CD8-positive, alpha-beta T cell (primary cell): ENCODE measurements at regions of chr14 and their contacts with region 1.

Region 1: DNA sequence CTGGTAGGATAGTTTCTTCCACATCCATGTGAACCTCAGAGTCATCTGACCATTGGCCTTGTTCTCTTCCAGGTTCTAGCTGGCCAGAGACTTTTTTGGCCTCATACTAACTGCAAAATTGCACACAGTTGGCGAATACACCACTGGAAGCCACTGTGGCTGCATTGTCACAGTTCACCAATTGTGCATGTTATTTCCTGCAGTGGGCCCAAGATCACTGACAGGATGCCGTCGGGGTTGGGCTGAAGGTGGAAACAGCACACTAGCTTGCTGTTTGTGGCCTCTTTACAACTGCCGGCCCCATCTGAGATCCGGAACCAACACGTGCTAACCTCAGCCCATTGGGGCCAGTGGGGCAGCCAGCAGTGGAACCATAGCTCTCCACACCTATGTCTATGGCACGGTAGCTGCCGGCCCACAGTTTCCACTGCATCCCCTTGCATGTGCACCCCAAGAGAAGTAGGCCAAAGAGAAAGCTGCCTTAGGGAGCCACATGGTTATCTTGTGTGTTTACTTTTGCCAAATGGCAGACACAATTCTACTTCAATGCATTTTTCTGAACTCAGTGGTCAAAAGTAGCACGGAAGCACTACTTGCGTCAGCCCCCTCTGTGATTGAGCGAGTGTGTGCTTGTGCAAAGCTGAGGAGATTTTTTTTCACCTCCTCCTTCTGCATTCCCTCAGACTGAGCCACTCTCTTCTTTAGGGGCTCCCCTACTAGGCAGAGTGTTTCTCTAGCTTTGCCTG is 464.0 kb downstream of the RAD51B start:
- DNase-seq: peak; percentile 32 to 87 (median 72)
- ATAC-seq: peak; percentile 69
- H3K4me3 ChIP-seq: peak overlapping the region in 1 of 2 experiments; percentile 6
- H3K4me3 Mint-ChIP-seq: peak overlapping the region; percentile 62
- H3K27ac ChIP-seq: peak overlapping the region; percentile 57 to 89
- H3K27ac Mint-ChIP-seq: peak overlapping the region; percentile 98
- H3K4me1 ChIP-seq: peaks cover 71% of the 10 kb centered on the region
- H3K4me1 Mint-ChIP-seq: peaks cover 85% of the 10 kb centered on the region
- H3K27me3 ChIP-seq: no peaks in the 10 kb centered on the region
- H3K27me3 Mint-ChIP-seq: no peaks in the 10 kb centered on the region
- CTCF ChIP-seq: no peak

Region 2: DNA sequence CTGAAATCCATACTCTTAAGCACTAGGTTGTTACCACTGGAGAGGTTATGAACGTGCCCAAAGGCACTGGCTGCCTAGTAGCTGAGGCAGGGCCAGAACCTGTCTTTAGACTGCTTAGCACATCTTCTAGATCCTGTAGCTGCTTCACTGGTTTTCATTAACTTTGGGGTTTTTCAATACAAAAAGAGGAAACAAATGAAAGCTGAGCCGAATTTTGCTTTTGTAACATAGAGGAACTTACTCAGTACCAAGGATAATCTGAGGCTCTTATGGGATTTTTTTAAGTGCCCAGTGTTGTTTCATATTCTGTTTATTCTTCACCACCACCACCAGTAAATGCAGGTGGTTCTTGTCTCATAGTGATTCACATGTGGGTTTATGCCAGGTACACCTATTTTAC is 67.9 kb before region 1 on chr14:
- CTCF ChIA-PET with region 1: no interaction called
- POLR2A ChIA-PET with region 1: no interaction called
- intact Hi-C with region 1: no loop called
- DNase-seq: no peak
- ATAC-seq: no peak
- H3K4me3 ChIP-seq: no peak overlapping the region
- H3K4me3 Mint-ChIP-seq: no peak overlapping the region
- H3K27ac ChIP-seq: no peak overlapping the region
- H3K27ac Mint-ChIP-seq: no peak overlapping the region
- H3K4me1 ChIP-seq: no peaks in the 10 kb centered on the region
- H3K4me1 Mint-ChIP-seq: peaks cover 36% of the 10 kb centered on the region
- H3K27me3 ChIP-seq: no peaks in the 10 kb centered on the region
- H3K27me3 Mint-ChIP-seq: no peaks in the 10 kb centered on the region
- CTCF ChIP-seq: no peak

Region 3: GRCh38 chr14:68239988-68240771 is 43.4 kb before region 1 on chr14:
- CTCF ChIA-PET with region 1: no interaction called
- POLR2A ChIA-PET with region 1: no interaction called
- intact Hi-C with region 1: no loop called
- DNase-seq: no peak
- ATAC-seq: no peak
- H3K4me3 ChIP-seq: no peak overlapping the region
- H3K4me3 Mint-ChIP-seq: no peak overlapping the region
- H3K27ac ChIP-seq: no peak overlapping the region
- H3K27ac Mint-ChIP-seq: no peak overlapping the region
- H3K4me1 ChIP-seq: no peaks in the 10 kb centered on the region
- H3K4me1 Mint-ChIP-seq: no peaks in the 10 kb centered on the region
- H3K27me3 ChIP-seq: no peaks in the 10 kb centered on the region
- H3K27me3 Mint-ChIP-seq: no peaks in the 10 kb centered on the region
- CTCF ChIP-seq: no peak

Region 4: DNA sequence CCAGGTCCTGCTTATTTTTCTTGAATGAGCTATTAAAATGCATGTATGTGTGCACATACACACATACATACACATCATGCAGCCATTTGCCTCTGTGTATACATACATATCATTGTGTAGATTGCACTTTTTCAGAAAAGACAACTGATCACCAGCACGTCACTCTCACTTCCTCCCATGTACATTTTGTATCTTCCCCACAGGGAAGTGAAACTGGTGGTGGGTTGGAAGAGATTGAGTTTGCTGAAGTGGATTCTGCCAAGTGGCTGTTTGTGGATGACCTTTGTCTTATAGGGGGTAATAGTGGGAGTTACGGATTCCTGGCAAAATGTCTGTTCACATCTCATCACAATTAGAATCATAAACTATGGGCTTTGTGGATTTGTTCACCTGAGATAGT is 15.4 kb before region 1 on chr14:
- CTCF ChIA-PET with region 1: interaction called, 3 read pairs
- POLR2A ChIA-PET with region 1: interaction called, 10 read pairs
- intact Hi-C with region 1: loop called in 1 of 2 experiments (anchors 2 kb)
- DNase-seq: peak in 1 of 9 experiments; percentile 57
- ATAC-seq: peak; percentile 40
- H3K4me3 ChIP-seq: no peak overlapping the region
- H3K4me3 Mint-ChIP-seq: peak overlapping the region; percentile 2
- H3K27ac ChIP-seq: peak overlapping the region in 1 of 2 experiments; percentile 49
- H3K27ac Mint-ChIP-seq: peak overlapping the region; percentile 81
- H3K4me1 ChIP-seq: peaks cover 35% of the 10 kb centered on the region
- H3K4me1 Mint-ChIP-seq: peaks cover 45% of the 10 kb centered on the region
- H3K27me3 ChIP-seq: no peaks in the 10 kb centered on the region
- H3K27me3 Mint-ChIP-seq: no peaks in the 10 kb centered on the region
- CTCF ChIP-seq: no peak

Region 5: DNA sequence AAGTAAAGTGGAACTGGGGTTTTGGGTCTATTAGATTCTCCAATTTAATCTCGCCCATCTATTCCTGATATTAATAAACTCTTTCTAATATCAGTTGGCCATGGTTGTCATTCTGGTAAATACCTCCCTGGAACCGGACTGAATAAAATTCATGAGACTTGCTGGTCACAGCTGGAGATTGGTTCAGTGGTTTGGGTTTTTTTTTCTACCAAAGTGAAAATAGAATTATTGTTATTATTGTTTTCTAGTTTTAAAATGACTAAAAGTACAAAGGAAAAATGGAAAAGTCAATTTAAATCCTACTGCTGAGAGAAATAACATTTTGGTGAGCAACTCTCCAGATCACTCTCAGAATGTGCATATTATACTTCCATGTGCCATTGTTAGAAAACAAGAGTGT is 71.9 kb after region 1 on chr14:
- CTCF ChIA-PET with region 1: no interaction called
- POLR2A ChIA-PET with region 1: no interaction called
- intact Hi-C with region 1: no loop called
- DNase-seq: no peak
- ATAC-seq: no peak
- H3K4me3 ChIP-seq: no peak overlapping the region
- H3K4me3 Mint-ChIP-seq: no peak overlapping the region
- H3K27ac ChIP-seq: no peak overlapping the region
- H3K27ac Mint-ChIP-seq: no peak overlapping the region
- H3K4me1 ChIP-seq: peaks cover 11% of the 10 kb centered on the region
- H3K4me1 Mint-ChIP-seq: peaks cover 22% of the 10 kb centered on the region
- H3K27me3 ChIP-seq: no peaks in the 10 kb centered on the region
- H3K27me3 Mint-ChIP-seq: no peaks in the 10 kb centered on the region
- CTCF ChIP-seq: no peak

Region 6: DNA sequence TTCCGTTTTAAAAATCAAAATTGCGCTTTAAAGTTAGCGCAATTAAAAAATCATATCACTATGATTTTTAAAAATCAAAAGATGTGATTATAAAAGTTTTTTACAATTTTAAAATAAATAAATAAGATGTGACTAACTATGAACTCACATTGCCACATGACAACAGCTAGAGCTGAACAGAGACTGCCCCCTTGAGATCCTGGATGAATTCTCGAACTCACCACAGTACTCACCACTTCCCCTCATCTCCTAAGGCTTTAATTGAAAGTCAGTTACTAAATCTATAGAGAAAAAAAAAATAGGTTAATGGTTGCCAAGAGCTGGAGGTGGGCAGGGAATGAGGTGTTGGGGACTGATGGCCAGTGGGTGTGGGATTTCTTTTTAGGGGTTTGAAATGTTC is 125.1 kb after region 1 on chr14:
- CTCF ChIA-PET with region 1: interaction called, 12 read pairs
- POLR2A ChIA-PET with region 1: interaction called, 3 read pairs
- intact Hi-C with region 1: loop called in 1 of 2 experiments (anchors 10 kb)
- DNase-seq: peak in 2 of 9 experiments; percentile 41 to 64
- ATAC-seq: peak; percentile 49
- H3K4me3 ChIP-seq: no peak overlapping the region
- H3K4me3 Mint-ChIP-seq: no peak overlapping the region
- H3K27ac ChIP-seq: no peak overlapping the region
- H3K27ac Mint-ChIP-seq: peak overlapping the region; percentile 4
- H3K4me1 ChIP-seq: peaks cover 25% of the 10 kb centered on the region
- H3K4me1 Mint-ChIP-seq: peaks cover 38% of the 10 kb centered on the region
- H3K27me3 ChIP-seq: no peaks in the 10 kb centered on the region
- H3K27me3 Mint-ChIP-seq: no peaks in the 10 kb centered on the region
- CTCF ChIP-seq: no peak

Region 7: DNA sequence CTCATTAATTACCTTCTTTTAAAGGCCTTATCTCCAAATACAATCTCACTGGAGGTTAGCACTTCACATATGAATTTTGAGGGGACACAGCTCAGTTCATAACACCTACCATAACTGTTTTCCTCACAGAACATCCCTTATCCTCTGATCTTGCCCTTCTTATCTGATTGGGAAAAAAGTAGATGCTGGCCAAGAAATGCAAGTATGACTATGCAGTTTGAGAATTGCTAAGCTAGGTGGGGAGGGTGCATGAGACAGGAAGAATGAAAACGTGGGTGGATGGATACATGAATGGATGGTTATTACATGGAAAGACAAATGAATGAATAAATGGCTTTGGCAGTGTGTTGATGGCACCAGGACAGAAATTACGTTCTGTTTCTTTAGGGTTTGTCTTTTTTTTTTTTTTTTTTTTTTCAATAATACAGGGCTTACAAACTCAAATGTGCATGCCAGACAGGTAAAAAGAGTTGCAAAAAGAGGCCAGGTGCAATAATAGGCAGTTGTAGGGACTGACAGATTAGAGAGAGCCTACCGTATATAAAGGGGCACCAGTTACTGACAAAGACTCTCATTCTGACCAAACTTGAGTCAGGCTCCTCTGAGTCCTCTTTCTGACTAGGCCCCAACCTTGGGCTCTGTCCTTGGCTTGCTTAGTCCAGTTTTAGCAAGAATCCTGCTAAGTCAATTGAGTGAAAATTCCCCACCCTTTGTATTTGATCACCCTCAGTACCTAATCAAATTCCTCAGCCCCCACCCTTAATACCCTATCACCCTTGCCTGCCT is 204.4 kb after region 1 on chr14:
- CTCF ChIA-PET with region 1: no interaction called
- POLR2A ChIA-PET with region 1: no interaction called
- intact Hi-C with region 1: loop called in 1 of 2 experiments (anchors 10 kb)
- DNase-seq: no peak
- ATAC-seq: no peak
- H3K4me3 ChIP-seq: no peak overlapping the region
- H3K4me3 Mint-ChIP-seq: no peak overlapping the region
- H3K27ac ChIP-seq: no peak overlapping the region
- H3K27ac Mint-ChIP-seq: no peak overlapping the region
- H3K4me1 ChIP-seq: peaks cover 28% of the 10 kb centered on the region
- H3K4me1 Mint-ChIP-seq: peaks cover 43% of the 10 kb centered on the region
- H3K27me3 ChIP-seq: no peaks in the 10 kb centered on the region
- H3K27me3 Mint-ChIP-seq: no peaks in the 10 kb centered on the region
- CTCF ChIP-seq: no peak